ENCODE measurements at regions of chr19 and their contacts with region 1.

Region 1: GRCh38 chr19:39846176-39846677 is at the start of gene FBL:
- DNase-seq: peak; percentile 100
- ATAC-seq: peak; percentile 91
- H3K4me3 ChIP-seq: peak within 1 kb of the TSS; percentile 35 to 52
- H3K27ac ChIP-seq: peak within 1 kb of the TSS; percentile 83
- H3K4me1 ChIP-seq: peaks cover 60% of the 10 kb centered on the region
- H3K27me3 ChIP-seq: no peaks in the 10 kb centered on the region
- CTCF ChIP-seq: no peak
- total RNA-seq, gene FBL: 4,927 TPM

Region 2: GRCh38 chr19:39104186-39104596 is 742.0 kb before region 1 on chr19:
- CTCF ChIA-PET with region 1: no interaction called
- POLR2A ChIA-PET with region 1: no interaction called
- in situ Hi-C with region 1: no loop called
- intact Hi-C with region 1: no loop called
- DNase-seq: no peak
- ATAC-seq: no peak
- H3K4me3 ChIP-seq: no peak overlapping the region
- H3K27ac ChIP-seq: no peak overlapping the region
- H3K4me1 ChIP-seq: peaks cover 8% of the 10 kb centered on the region
- H3K27me3 ChIP-seq: no peaks in the 10 kb centered on the region
- CTCF ChIP-seq: no peak

Region 3: DNA sequence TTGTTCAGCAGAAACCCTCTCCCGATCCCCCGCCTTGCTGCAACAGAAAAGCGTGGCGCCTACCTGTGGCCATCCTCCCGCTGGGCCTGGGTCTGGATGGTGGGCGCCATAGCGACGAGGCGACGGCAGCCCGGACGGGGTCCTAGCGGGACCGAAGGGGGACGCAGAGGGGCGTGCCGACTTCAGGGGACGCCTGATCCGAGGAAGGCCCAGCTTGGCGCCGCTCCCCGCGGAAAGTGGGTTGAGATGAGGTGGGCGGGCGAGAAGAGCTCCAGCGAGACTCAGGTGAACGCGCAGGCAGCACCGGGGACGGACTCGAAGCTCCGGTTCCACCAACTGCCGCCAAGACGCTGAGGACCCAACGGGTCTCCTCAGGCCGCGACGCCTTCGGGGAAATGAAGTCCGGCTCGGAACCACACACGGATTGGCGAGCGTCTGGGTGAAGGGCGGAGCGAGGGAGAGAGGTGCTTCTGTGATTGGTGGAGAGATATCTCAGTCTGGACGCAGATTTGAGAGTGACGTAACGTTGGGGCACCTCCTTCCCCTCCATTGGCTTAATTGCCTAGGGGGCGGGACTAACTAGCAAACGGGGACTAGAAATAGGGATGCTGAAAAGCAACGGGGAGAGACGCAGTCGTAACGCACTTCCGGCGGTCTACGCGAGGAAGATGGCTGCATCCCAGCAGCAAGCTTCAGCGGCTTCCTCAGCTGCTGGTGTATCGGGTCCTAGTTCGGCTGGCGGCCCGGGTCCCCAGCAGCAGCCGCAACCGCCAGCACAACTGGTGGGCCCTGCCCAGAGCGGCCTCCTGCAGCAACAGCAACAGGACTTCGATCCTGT is 455.3 kb before region 1 on chr19 and contains the starts of genes MED29 and PAF1:
- CTCF ChIA-PET with region 1: interaction called, 3 read pairs
- POLR2A ChIA-PET with region 1: no interaction called
- in situ Hi-C with region 1: loop called (anchors 5 kb)
- intact Hi-C with region 1: no loop called
- DNase-seq: peak; percentile 100
- ATAC-seq: peak; percentile 96
- H3K4me3 ChIP-seq: peak within 1 kb of the TSS; percentile 39 to 51
- H3K27ac ChIP-seq: peak within 1 kb of the TSS; percentile 86
- H3K4me1 ChIP-seq: peaks cover 24% of the 10 kb centered on the region
- H3K27me3 ChIP-seq: no peaks in the 10 kb centered on the region
- CTCF ChIP-seq: no peak
- total RNA-seq, gene MED29: 739 TPM
- total RNA-seq, gene PAF1: 901 TPM

Region 4: GRCh38 chr19:39778763-39779162 is 67.5 kb before region 1 on chr19 and contains the start of gene LEUTX:
- CTCF ChIA-PET with region 1: interaction called, 7 read pairs
- POLR2A ChIA-PET with region 1: interaction called, 4 read pairs
- in situ Hi-C with region 1: loop called (anchors 5 kb)
- intact Hi-C with region 1: no loop called
- DNase-seq: no peak
- ATAC-seq: no peak
- H3K4me3 ChIP-seq: no peak within 1 kb of the TSS
- H3K27ac ChIP-seq: no peak within 1 kb of the TSS
- H3K4me1 ChIP-seq: no peaks in the 10 kb centered on the region
- H3K27me3 ChIP-seq: peaks cover 86% of the 10 kb centered on the region
- CTCF ChIP-seq: no peak
- total RNA-seq, gene LEUTX: not detected

Region 5: GRCh38 chr19:39833464-39834286 is 12.6 kb before region 1 on chr19 and contains the start of gene DYRK1B:
- CTCF ChIA-PET with region 1: interaction called, 109 read pairs
- POLR2A ChIA-PET with region 1: interaction called, 177 read pairs
- in situ Hi-C with region 1: no loop called
- intact Hi-C with region 1: no loop called
- DNase-seq: peak; percentile 100
- ATAC-seq: peak; percentile 94
- H3K4me3 ChIP-seq: peak within 1 kb of the TSS; percentile 36 to 57
- H3K27ac ChIP-seq: peak within 1 kb of the TSS; percentile 76
- H3K4me1 ChIP-seq: peaks cover 26% of the 10 kb centered on the region
- H3K27me3 ChIP-seq: no peaks in the 10 kb centered on the region
- CTCF ChIP-seq: no peak
- total RNA-seq, gene DYRK1B: 322 TPM

Region 6: GRCh38 chr19:39951686-39952085 is 105.5 kb after region 1 on chr19:
- CTCF ChIA-PET with region 1: interaction called, 5 read pairs
- POLR2A ChIA-PET with region 1: interaction called, 10 read pairs
- in situ Hi-C with region 1: no loop called
- intact Hi-C with region 1: no loop called
- DNase-seq: no peak
- ATAC-seq: peak; percentile 20
- H3K4me3 ChIP-seq: no peak overlapping the region
- H3K27ac ChIP-seq: no peak overlapping the region
- H3K4me1 ChIP-seq: no peaks in the 10 kb centered on the region
- H3K27me3 ChIP-seq: no peaks in the 10 kb centered on the region
- CTCF ChIP-seq: no peak

Region 7: DNA sequence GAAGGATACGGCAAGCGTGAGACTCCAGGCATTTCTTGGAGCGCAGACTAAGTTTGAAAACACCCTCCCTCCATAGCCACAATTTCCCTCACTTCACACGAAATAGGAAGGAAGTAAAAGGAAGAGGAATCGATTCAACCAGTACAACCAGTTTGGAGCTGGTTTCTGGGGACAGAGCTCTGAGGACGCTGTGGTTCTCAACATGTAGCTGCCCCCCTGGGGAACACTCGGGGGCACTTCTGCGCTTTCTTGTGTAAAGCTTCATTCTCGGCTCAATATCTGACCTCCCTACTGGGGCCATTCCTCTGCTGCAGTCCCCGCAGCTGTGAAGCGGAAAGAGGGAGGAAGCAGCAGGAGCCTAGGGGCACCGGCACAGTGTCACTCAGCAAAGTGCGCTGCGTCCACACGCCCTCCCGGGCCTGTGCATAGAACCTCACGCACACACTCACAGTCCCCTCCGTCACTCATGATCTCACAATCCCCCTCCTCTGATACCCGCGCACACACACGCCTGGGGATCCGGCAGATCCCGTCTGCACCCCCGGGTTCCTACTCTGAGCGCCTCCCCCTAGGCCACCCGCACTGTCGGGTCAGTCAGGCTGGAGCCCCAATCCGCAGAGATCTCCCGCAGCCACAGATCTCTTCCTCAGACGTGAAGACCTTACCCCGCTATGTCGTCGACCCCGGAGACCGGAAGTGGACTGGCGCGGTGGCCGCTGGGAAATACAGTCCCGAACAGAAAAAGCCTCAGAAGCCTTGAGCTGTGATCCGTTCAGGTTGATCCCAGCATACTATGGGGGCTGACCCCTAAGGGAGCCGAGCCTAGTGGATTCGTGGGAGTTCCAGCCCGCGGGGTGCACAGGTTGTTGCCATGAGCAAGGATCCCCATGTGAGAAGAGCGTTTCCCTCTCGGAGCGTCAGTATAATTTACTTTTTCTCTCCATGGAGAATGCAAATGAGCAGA is 244.3 kb after region 1 on chr19 and contains the start of gene ZNF780A:
- CTCF ChIA-PET with region 1: interaction called, 3 read pairs
- POLR2A ChIA-PET with region 1: interaction called, 3 read pairs
- in situ Hi-C with region 1: loop called (anchors 5 kb)
- intact Hi-C with region 1: no loop called
- DNase-seq: peak; percentile 100
- ATAC-seq: peak; percentile 99
- H3K4me3 ChIP-seq: peak within 1 kb of the TSS; percentile 36 to 48
- H3K27ac ChIP-seq: peak within 1 kb of the TSS; percentile 83
- H3K4me1 ChIP-seq: peaks cover 15% of the 10 kb centered on the region
- H3K27me3 ChIP-seq: no peaks in the 10 kb centered on the region; the same call in 1 of the 2 replicates
- CTCF ChIP-seq: no peak
- total RNA-seq, gene ZNF780A: 251 TPM

Measured in Panc1 (cell line).